AG04450 (cell line): ENCODE measurements at regions of chr6 and their contacts with region 1.

Region 1: DNA sequence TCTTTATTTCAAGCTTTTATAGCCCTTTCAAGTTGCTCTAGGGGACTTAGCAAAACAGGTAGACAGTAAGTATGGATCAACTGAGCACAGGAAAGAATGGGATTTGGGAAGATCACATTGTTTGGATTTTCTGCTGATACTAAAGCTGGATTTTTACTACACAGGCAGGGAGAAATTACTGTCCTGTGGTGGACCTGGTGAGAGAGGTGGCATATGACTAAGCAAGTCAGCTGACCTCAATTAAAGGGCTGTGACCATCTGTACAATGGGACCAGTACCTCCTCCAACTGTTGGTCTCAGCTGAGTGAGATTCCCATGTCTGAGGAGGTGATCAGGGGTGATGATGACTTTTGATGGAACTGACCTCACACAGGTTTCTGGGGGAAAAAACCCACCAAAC is 28.0 kb downstream of the RREB1 start:
- DNase-seq: no peak
- H3K4me3 ChIP-seq: no peak overlapping the region
- H3K27ac ChIP-seq: no peak overlapping the region
- H3K27me3 ChIP-seq: no peaks in the 10 kb centered on the region
- CTCF ChIP-seq: no peak

Region 2: DNA sequence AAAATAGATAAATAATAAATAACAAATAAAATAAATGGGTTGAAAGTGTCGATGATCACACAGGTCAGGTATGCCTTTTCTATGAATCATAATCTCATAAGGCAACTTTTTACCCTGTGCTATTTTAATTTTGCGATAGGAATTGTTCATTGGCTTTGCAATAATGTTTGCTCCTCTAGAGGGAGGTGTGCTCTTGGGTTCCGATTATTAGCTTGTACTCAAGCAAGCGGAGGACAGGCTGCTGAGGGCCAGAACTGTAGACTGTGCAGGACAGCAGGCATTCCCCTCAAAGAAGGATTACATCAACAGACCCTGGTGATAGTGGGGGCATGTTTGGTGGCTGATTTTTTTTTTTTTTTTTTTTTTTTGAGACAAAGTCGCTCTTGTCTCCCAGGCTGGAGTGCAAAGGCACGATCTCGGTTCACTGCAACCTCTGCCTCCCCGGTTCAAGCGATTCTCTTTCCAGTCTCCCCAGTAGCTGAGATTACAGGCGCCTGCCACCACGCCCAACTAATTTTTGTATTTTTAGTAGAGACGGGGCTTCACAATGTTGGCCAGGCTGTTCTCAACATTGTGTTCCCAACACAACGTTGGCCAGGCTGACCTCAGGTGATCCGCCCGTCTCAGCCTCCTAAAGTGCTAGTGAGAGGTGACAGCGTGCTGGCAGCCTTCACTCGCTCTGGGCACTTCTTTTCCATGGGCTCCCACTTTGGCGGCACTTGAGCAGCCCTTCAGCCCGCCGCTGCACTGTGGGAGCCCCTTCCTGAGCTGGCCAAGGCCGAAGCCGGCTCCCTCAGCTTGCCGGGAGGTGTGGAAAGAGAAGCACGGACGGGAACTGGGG is 289.4 kb after region 1 on chr6:
- CTCF ChIA-PET with region 1: no interaction called
- POLR2A ChIA-PET with region 1: interaction called, 12 read pairs
- DNase-seq: no peak
- H3K4me3 ChIP-seq: no peak overlapping the region
- H3K27ac ChIP-seq: no peak overlapping the region
- H3K27me3 ChIP-seq: no peaks in the 10 kb centered on the region
- CTCF ChIP-seq: peak; percentile 53